ENCODE measurements at regions of chr1 and their contacts with region 1.

Region 1: GRCh38 chr1:209643285-209644020 is 8.8 kb downstream of the LAMB3 start:
- DNase-seq: peak; percentile 88

Region 2: DNA sequence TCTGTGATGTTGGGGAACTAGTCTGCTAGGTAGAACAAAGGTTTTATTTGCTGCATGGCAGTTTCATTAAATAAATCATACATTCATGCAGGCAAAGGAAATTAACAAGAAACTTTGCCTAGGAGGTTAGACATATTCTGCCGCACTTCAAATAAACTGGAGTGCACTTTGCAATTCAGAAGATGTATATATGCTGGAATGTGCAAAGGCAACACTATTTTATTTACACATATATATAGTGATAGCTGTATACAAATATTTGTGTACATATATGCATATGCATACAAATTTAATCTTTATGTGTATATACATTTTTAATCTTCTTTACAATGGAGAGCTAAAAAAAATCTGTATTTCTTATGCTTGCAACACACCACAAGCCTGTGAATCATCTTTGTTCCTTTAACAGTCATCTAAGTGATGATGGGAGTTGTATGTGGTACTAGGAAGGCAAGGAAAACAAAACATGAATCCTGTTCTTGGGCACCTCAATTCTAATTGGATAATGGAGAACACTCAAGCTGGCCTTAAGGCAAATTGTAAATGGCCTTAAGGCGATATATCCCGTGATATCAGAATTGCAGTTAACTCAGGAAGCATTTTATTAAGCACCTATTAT is 665.7 kb before region 1 on chr1:
- intact Hi-C with region 1: no loop called
- DNase-seq: no peak

Region 3: GRCh38 chr1:209674957-209675564 is 31.6 kb after region 1 on chr1 and contains the start of gene G0S2:
- intact Hi-C with region 1: loop called (anchors 1 kb)
- DNase-seq: peak; percentile 95
- total RNA-seq, gene G0S2: 246 TPM

Region 4: DNA sequence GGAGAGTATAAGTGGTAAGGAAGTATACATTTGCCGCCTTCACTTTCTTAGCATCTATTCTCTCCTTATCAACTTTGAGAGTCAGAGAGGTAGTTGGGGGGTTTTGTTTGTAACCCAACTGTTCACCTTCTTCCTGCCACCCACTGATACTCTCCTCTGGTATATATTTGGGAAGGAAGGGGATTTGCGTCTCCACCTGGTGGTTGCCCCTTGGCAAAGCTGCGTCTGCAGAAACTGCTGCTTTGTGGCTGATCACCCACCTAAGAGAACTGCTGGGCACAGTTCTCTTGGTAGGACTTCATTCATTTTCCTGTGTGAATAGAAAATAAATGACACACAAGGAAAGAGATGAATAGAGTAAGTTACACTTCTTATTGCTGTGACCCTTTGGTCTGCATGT is 381.5 kb after region 1 on chr1:
- intact Hi-C with region 1: no loop called
- DNase-seq: no peak

Measured in cardiac septum (tissue), 1 donor.